Heart left ventricle (tissue), 16 donors: ENCODE measurements at regions of chrX and their contacts with region 1.

Region 1: DNA sequence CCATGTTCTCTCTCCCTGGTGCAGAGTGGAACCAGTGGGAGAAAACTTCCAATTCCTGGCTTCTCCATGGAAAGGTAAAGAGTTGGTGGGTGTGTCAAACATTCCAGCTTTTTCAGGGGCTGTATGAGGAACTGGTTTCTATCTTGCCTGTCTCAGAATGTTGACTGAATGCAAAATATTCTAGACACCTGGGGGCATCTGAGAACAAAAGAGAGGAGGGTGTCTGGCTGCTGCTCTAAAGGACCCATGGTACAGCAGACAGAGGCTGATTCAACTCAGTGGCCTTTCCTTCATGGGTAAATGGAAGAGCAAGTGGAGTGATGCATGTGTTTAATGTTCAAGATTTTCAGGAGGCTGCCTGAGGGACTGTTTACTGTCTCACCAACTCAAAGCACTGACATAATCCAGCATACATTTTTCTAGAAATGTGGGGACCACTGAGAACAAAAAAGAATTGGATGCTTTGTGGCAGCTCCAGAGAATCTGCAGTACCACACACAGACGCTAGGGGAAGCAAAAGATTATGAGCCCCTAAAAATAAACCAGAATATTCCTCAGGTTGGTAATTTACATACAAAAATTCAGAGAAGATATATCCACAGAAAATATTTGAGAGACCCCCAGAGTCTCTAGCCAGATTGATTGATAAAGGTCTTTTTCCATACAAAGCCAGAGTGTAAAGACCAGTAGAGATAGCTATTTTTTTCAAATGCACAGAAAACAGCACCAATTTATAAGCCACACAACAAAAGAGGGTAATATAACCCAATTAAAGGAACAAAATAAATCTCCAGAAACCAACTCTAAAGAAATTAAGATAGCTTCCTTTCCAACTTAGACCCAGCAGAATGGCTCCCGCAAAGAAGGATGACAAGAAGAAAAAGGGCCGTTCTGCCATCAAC is 48.0 kb upstream of the STARD8 start:
- DNase-seq: no peak
- ATAC-seq: no peak
- H3K4me3 ChIP-seq: no peak overlapping the region
- H3K27ac ChIP-seq: no peak overlapping the region
- H3K4me1 ChIP-seq: no peaks in the 10 kb centered on the region
- H3K27me3 ChIP-seq: peaks cover 0 to 12% (median 0%) of the 10 kb centered on the region in 9 donors
- CTCF ChIP-seq: peak; percentile 45 to 76 (median 60)
- POLR2A ChIP-seq: no peak

Region 2: DNA sequence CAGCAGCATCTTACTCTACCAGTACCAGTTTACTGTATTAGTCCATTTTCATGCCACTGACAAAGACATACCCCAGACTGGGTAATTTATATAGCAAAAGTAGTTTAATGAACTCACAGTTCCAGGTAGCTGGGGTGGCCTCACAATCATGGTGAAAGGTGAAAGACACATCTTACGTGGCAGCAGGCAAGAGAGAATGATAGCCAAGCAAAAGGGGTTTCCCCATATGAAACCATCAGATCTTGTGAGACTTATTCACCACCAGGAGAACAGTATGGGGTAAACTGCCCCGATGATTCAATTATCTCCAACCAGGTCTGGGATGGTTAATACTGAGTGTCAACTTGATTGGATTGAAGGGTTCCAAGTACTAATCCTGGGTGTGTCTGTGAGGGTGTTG is 31.4 kb before region 1 on chrX:
- intact Hi-C with region 1: loop called in 1 of 10 experiments (anchors 1 kb)
- DNase-seq: no peak
- ATAC-seq: no peak
- H3K4me3 ChIP-seq: no peak overlapping the region
- H3K27ac ChIP-seq: no peak overlapping the region
- H3K4me1 ChIP-seq: no peaks in the 10 kb centered on the region
- H3K27me3 ChIP-seq: peaks cover 0 to 5% (median 0%) of the 10 kb centered on the region in 9 donors
- CTCF ChIP-seq: no peak
- POLR2A ChIP-seq: no peak

Region 3: DNA sequence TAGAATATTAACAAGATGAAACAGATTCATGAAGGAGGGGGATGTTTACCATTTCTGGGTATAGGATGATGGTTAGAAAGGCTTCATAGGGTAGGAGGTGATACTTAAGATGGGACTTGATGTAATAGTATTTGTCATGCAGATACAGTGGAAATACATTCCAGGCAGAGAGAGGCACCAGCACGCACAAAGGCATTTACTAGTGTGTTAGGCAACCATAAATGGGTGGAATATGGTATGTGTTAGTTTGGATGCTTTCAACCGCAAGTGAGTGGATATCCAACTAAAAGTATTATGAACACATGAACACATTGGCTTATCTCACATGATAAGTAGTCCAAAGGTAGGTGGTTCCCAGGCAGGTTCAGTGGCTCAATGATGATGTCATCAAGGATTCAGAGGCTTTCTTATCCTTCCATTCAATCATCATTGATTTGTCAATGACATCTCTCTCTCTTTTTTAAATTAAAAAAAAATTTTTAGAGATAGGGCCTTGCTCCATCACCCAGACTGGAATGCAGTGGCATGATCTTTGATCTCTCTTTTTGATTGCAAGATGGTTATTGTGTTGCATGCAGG is 35.2 kb after region 1 on chrX:
- intact Hi-C with region 1: no loop called
- DNase-seq: no peak
- ATAC-seq: no peak
- H3K4me3 ChIP-seq: no peak overlapping the region
- H3K27ac ChIP-seq: no peak overlapping the region
- H3K4me1 ChIP-seq: no peaks in the 10 kb centered on the region
- H3K27me3 ChIP-seq: peaks cover 0 to 6% (median 0%) of the 10 kb centered on the region in 9 donors
- CTCF ChIP-seq: no peak
- POLR2A ChIP-seq: no peak

Region 4: GRCh38 chrX:68699960-68700746 is 100.7 kb after region 1 on chrX:
- intact Hi-C with region 1: loop called in 2 of 10 experiments (anchors 5 to 10 kb)
- DNase-seq: peak in 1 of 5 donors; percentile 25
- ATAC-seq: peak in 3 of 4 donors; percentile 23 to 30 (median 25)
- H3K4me3 ChIP-seq: no peak overlapping the region
- H3K27ac ChIP-seq: peak overlapping the region in 10 of 12 donors; percentile 24 to 86 (median 45)
- H3K4me1 ChIP-seq: peaks cover 0 to 81% (median 22%) of the 10 kb centered on the region in 12 donors
- H3K27me3 ChIP-seq: peaks cover 0 to 6% (median 0%) of the 10 kb centered on the region in 9 donors
- CTCF ChIP-seq: no peak
- POLR2A ChIP-seq: no peak

Region 5: GRCh38 chrX:68710870-68711576 is 111.5 kb after region 1 on chrX:
- intact Hi-C with region 1: loop called in 3 of 10 experiments (anchors 5 to 10 kb)
- DNase-seq: peak in 2 of 5 donors; percentile 45 to 57
- ATAC-seq: peak; percentile 64 to 74 (median 70)
- H3K4me3 ChIP-seq: no peak overlapping the region
- H3K27ac ChIP-seq: no peak overlapping the region
- H3K4me1 ChIP-seq: peaks cover 0 to 29% (median 2%) of the 10 kb centered on the region in 12 donors
- H3K27me3 ChIP-seq: no peaks in the 10 kb centered on the region
- CTCF ChIP-seq: peak; percentile 25 to 58 (median 46)
- POLR2A ChIP-seq: no peak

Region 6: DNA sequence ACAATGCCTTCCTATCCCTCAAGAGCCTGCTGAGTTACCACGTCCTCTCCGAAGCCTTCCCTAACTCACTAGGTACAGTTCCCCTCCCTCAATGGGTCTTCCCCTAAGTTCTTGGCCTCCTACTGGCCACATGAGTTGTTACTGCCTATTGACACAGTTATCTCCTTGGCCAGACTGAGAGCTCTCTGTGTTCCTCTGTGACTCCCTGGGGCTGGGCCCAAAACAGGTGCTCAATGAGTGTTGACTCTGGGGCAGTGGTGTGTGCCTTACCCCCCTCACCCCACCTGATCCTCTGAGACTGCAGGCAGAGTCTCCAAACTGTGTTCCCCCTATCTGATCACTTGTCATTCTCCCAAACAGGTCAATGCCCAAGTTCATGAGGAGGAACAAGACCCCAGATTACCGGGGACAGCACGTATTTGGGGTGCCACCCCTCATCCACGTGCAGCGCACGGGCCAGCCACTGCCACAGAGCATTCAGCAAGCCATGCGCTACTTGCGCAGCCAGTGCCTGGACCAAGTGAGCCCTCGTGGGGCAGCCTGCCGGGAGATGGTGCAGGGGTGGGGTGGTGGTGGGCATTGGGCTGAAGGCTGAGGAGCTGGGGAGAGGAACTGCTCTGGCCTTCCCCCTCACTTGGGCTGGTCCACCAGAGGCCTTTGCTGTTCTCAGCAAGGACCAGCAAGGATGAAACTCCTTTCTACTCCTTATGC is 120.6 kb after region 1 on chrX:
- intact Hi-C with region 1: loop called in 2 of 10 experiments (anchors 10 kb)
- DNase-seq: no peak
- ATAC-seq: peak; percentile 15 to 60 (median 34)
- H3K4me3 ChIP-seq: no peak overlapping the region
- H3K27ac ChIP-seq: peak overlapping the region in 1 of 12 donors; percentile 22
- H3K4me1 ChIP-seq: peaks cover 0 to 7% (median 0%) of the 10 kb centered on the region in 12 donors
- H3K27me3 ChIP-seq: peaks cover 0 to 3% (median 0%) of the 10 kb centered on the region in 9 donors
- CTCF ChIP-seq: peak in 3 of 12 donors; percentile 7 to 36 (median 27)
- POLR2A ChIP-seq: no peak